Head of caudate nucleus (tissue), 42 donors: ENCODE measurements at regions of chr3 and their contacts with region 1.

Region 1: DNA sequence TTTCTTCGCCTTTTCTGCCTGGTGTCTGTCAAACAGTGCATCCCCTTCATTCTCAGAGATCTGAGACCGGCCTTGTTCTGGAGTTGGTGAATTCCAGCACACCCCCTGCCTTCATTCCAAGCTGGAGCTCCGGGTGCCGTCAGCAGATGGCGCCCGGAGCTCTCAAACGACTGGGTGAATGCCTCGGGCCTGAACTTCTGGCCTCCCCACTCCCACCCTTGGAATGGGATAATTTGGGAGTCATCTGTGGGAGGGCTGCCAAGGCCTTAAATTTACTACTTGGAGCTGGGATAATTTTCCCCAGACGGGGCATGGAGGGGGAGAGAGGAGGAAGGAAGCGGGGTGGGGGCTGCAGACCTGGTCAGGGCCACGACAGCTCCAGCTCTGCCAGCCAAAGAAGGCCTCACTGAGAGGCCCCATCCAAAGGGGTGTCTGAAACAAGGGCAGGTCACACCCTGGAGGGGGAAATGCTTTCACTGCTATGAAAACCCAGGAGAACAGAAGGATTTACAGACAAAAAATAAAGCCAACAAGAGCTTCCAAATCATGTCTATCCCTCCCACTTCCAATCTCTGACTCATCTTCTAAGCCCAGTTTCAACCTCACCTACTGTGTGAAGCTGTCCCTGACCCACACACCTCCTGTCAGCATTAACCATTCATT is 187.9 kb downstream of the OPA1 start:
- DNase-seq: peak; percentile 49 to 86 (median 71)

Region 2: GRCh38 chr3:194315088-194315964 is 534.4 kb after region 1 on chr3:
- intact Hi-C with region 1: loop called (anchors 2 kb)
- DNase-seq: peak; percentile 61 to 96 (median 88)